Sciatic nerve (tissue), 2 donors: ENCODE measurements at regions of chr19 and their contacts with region 1.

Region 1: GRCh38 chr19:30692181-30692811 is 320.1 kb downstream of the ZNF536 start:
- DNase-seq: no peak
- ATAC-seq: peak; percentile 84

Region 2: GRCh38 chr19:30669329-30670010 is 22.8 kb before region 1 on chr19:
- intact Hi-C with region 1: loop called (anchors 2 kb)
- DNase-seq: peak; percentile 90
- ATAC-seq: peak; percentile 68